Activated CD4-positive, alpha-beta T cell treated with anti-CD3 and anti-CD28 coated beads, Interleukin-2, amount 10 ng/mL, durations not matched to agents 7 days and 5 days (primary cell): ENCODE measurements at regions of chr20 and their contacts with region 1.

Region 1: DNA sequence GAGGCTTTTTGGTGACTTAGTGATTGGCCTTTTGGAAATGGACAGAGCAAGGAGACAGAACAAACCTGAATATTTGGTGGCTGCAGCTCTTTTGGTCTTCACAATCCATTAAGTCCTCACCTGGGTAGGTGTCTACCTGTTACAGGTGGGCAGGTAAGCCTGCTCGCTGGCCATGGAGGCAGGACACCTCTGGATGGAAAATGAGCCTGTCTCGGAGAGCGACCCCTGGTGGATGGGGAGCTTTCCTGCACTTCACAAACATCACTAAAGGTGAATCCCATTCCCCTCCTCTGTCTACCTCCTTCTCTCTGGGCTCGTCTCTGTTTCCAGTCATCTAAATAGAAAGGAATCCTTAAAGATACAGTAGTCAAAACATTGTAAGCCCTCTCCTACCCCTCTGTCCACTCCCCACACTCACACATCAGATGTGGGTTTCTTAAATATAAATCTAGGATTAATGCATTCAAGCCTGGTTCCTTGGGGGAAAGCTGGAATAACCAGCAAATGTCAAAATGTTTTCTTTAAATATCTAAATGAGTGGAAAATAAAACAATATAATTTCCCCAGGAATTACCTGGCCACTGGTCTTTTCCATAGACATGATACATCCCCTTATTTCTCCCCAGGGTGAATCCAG is 304.9 kb downstream of the CDH26 start:
- DNase-seq: peak; percentile 58
- H3K4me3 Mint-ChIP-seq: no peak overlapping the region
- H3K27ac Mint-ChIP-seq: no peak overlapping the region
- H3K4me1 Mint-ChIP-seq: peaks cover 19% of the 10 kb centered on the region
- H3K27me3 Mint-ChIP-seq: no peaks in the 10 kb centered on the region

Region 2: DNA sequence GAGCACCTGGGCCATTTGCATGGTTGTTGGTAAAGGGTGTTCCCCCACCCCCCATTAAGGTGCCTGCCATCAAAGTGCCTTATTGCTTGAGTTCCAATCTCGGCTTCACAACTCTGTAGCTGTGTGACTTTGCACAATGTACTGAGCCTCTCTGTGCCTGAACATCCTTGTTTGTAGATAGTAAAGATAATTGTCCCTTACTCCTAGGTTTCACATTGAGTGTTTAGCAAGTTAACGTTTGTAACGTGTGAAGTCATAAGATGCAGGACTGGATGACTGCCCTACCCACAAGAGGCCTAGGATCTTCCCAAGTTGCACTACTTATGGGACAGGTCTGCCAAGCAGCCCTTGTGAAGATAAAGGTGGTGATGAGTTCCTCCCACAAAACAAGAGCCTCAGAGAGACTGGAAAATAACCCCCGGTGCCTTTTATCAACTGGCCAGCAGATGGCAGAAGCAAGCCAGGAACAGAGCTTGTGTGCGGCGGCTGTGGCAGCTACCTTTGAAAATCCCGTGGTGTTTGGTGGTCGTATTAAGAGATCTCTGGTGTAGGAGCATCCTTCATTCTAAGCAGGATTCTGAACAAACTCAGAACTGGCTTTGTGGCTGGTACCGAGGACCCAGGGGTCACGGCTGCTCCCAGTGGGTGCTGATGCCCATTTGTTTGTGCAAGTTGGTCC is 205.8 kb before region 1 on chr20:
- CTCF ChIA-PET with region 1: interaction called, 14 read pairs
- POLR2A ChIA-PET with region 1: no interaction called
- DNase-seq: peak; percentile 77
- H3K4me3 Mint-ChIP-seq: peak overlapping the region; percentile 80
- H3K27ac Mint-ChIP-seq: peak overlapping the region; percentile 89
- H3K4me1 Mint-ChIP-seq: peaks cover 51% of the 10 kb centered on the region
- H3K27me3 Mint-ChIP-seq: no peaks in the 10 kb centered on the region